K562 (cell line): ENCODE measurements at regions of chr17 and their contacts with region 1.

Region 1: DNA sequence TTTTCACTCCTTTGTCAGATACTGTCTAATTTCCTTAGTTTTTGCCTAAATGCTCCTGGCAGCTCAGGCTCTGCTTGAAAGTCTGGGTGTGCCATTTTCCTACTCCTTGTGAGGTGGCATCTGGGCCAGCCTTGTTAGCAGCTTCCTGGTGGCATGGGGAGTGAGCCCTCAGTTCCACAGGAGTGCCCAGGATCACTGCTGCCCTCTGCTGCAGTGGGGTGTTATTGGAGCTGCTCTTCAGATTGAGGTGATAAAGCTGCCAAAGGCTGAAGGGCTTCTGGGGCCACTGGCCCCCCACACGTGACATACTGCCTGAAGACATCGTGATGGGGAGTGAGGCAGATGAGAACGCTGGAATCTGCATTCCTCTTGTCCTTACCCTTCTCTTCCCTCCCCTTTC is 27.4 kb downstream of the CEP95 start:
- DNase-seq: peak in 2 of 4 experiments; percentile 20 to 22
- ATAC-seq: peak; percentile 4; the same call in 1 of the 3 replicates
- H3K4me3 ChIP-seq: no peak overlapping the region
- H3K27ac ChIP-seq: no peak overlapping the region
- H3K4me1 ChIP-seq: peaks cover 0 to 19% of the 10 kb centered on the region in 2 experiments; a peak in 3 of 5 replicates
- H3K27me3 ChIP-seq: no peaks in the 10 kb centered on the region
- CTCF ChIP-seq: 0 out of 6 replicates have a peak, but pooled peaks have one; percentile 10 to 12 (median 12)
- EP300 ChIP-seq: no peak
- POLR2A ChIP-seq: no peak
- RAD21 ChIP-seq: no peak

Region 2: DNA sequence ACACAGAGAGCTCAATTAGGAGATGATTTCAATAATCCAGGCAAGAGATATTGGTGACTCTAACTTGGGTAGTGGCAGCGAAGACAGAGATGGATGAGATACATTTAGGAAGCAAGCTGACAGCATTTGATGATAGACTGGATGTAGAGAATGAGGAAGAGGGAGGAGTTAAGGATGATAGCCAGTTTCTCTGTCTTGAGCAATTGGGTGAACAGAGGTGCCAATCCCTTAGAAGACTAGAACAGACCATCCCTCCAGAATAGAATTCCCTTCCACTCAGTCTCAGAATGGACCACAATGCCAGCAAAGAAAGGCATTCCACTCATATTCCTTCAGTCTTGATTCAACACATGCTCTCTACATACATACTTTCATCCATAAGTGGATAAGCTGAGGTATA is 54.5 kb before region 1 on chr17:
- CTCF ChIA-PET with region 1: no interaction called
- POLR2A ChIA-PET with region 1: no interaction called
- in situ Hi-C with region 1: no loop called
- intact Hi-C with region 1: no loop called
- DNase-seq: no peak
- ATAC-seq: no peak; the same call in 2 of the 3 replicates
- H3K4me3 ChIP-seq: no peak overlapping the region
- H3K27ac ChIP-seq: no peak overlapping the region
- H3K4me1 ChIP-seq: no peaks in the 10 kb centered on the region
- H3K27me3 ChIP-seq: no peaks in the 10 kb centered on the region
- CTCF ChIP-seq: no peak
- EP300 ChIP-seq: no peak
- POLR2A ChIP-seq: no peak
- RAD21 ChIP-seq: no peak

Region 3: GRCh38 chr17:64554028-64554637 is 20.0 kb after region 1 on chr17:
- CTCF ChIA-PET with region 1: no interaction called
- POLR2A ChIA-PET with region 1: interaction called, 15 read pairs
- in situ Hi-C with region 1: no loop called
- intact Hi-C with region 1: no loop called
- DNase-seq: peak; percentile 24 to 33 (median 32)
- ATAC-seq: peak; percentile 86
- H3K4me3 ChIP-seq: no peak overlapping the region
- H3K27ac ChIP-seq: no peak overlapping the region
- H3K4me1 ChIP-seq: peaks cover 0 to 5% of the 10 kb centered on the region in 2 experiments; a peak in 2 of 5 replicates
- H3K27me3 ChIP-seq: no peaks in the 10 kb centered on the region
- CTCF ChIP-seq: no peak
- EP300 ChIP-seq: no peak
- POLR2A ChIP-seq: no peak
- RAD21 ChIP-seq: no peak

Region 4: DNA sequence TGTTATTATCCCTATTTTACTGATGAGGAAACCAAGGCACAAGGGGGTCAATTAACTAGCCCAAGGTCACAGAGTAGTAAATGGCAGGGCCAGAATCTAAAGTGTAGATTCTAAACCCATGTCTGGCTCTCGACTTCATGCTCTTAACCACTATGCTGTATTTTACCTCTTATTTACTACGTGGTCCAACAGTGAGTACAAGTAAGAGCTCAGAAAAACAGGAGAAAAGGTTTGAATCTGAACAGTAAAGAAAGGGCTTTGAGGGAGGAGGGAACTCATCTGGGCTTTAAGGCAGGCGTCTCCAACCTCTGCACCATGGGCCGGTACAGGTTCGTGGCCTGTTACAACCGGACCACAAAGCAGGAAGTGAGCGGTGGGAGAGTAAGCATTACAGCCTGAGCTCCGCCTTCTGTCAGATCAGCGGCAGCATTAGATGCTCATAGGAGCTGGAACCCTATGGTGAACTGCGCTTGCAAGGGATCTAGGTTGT is 65.1 kb after region 1 on chr17:
- CTCF ChIA-PET with region 1: no interaction called
- POLR2A ChIA-PET with region 1: no interaction called
- in situ Hi-C with region 1: no loop called
- intact Hi-C with region 1: loop called (anchors 2 kb)
- DNase-seq: peak; percentile 30 to 88 (median 54)
- ATAC-seq: peak; percentile 98
- H3K4me3 ChIP-seq: peak overlapping the region; percentile 29
- H3K27ac ChIP-seq: peak overlapping the region; percentile 84
- H3K4me1 ChIP-seq: peaks cover 5 to 9% of the 10 kb centered on the region in 2 experiments; a peak in 4 of 5 replicates
- H3K27me3 ChIP-seq: no peaks in the 10 kb centered on the region
- CTCF ChIP-seq: no peak
- EP300 ChIP-seq: no peak
- POLR2A ChIP-seq: peak; percentile 82
- RAD21 ChIP-seq: no peak

Region 5: DNA sequence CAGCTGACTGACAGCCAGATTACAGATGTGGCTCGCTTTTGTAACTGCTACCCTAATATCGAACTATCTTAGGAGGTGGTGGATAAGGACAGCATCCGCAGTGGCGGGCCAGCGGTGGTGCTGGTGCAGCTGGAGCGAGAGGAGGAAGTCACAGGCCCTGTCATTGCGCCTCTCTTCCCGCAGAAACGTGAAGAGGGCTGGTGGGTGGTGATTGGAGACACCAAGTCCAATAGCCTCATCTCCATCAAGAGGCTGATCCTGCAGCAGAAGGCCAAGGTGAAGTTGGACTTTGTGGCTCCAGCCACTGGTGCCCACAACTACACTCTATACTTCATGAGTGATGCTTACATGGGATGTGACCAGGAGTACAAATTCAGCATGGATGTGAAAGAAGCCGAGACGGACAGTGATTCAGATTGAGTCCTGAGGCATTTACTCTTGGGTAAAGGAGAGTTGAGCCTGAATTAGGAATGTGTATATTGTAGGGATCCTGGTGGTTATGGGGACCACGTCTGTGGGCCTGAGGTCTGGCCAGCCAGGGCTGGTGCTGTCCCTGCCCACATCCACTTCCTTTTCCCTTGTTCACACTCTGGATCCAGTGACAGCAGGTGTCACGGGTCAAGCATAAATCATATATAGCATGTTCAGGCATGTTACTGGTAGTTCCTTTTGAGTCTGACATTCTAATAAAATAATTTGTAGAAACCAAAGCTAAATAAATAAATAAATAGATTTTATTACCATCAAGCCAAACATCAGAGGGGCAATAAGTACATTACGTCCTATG is 216.9 kb after region 1 on chr17:
- CTCF ChIA-PET with region 1: no interaction called
- POLR2A ChIA-PET with region 1: no interaction called
- in situ Hi-C with region 1: no loop called
- intact Hi-C with region 1: no loop called
- DNase-seq: no peak
- ATAC-seq: no peak
- H3K4me3 ChIP-seq: no peak overlapping the region
- H3K27ac ChIP-seq: no peak overlapping the region
- H3K4me1 ChIP-seq: no peaks in the 10 kb centered on the region; a peak in 1 of 5 replicates
- H3K27me3 ChIP-seq: no peaks in the 10 kb centered on the region
- CTCF ChIP-seq: no peak
- EP300 ChIP-seq: no peak
- POLR2A ChIP-seq: no peak
- RAD21 ChIP-seq: no peak